ENCODE measurements at regions of chr1 and their contacts with region 1.

Region 1: GRCh38 chr1:16055613-16056520 is 12.3 kb downstream of the CLCNKB start:
- DNase-seq: peak; percentile 86 to 88
- H3K4me3 ChIP-seq: no peak overlapping the region
- H3K27ac ChIP-seq: no peak overlapping the region
- H3K4me1 ChIP-seq: no peaks in the 10 kb centered on the region
- H3K27me3 ChIP-seq: no peaks in the 10 kb centered on the region
- CTCF ChIP-seq: peak; percentile 94 to 98 (median 98)
- POLR2A ChIP-seq: no peak

Region 2: DNA sequence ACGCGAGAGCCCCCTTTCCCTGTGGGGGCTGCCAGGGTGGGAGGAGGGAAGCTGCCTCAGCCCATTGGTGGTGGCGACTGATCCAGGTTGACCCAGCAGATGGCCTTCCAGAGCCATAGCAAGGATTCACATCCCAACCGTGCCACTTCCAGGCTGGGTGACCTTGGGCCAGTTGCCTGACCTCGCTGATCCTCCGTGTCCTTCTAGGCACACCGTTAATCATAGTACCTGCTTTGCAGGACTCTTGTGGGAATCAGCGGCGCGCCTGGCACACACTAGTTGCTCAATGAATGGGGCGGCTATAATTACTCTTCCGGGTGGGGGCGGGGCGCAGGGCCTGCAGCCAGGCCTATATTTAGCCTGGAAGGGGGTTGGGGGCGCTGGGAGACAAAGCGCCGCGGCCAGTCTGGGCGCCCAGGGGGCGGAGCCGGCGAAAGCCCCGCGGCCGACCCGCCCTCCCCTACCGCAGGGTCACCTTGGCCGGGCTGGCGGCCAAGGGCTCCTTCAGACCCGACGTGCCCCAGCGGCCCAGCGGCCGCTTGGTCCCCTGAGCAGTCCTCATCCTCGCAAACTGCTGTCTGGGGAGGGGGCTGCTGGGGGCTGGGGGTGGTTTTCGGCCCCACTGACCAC is 43.2 kb before region 1 on chr1:
- intact Hi-C with region 1: no loop called
- DNase-seq: peak; percentile 54 to 84
- H3K4me3 ChIP-seq: peak overlapping the region; percentile 32 to 64 (median 48)
- H3K27ac ChIP-seq: peak overlapping the region; percentile 73 to 87
- H3K4me1 ChIP-seq: peaks cover 4 to 6% of the 10 kb centered on the region in 2 donors
- H3K27me3 ChIP-seq: no peaks in the 10 kb centered on the region
- CTCF ChIP-seq: no peak
- POLR2A ChIP-seq: no peak

Region 3: DNA sequence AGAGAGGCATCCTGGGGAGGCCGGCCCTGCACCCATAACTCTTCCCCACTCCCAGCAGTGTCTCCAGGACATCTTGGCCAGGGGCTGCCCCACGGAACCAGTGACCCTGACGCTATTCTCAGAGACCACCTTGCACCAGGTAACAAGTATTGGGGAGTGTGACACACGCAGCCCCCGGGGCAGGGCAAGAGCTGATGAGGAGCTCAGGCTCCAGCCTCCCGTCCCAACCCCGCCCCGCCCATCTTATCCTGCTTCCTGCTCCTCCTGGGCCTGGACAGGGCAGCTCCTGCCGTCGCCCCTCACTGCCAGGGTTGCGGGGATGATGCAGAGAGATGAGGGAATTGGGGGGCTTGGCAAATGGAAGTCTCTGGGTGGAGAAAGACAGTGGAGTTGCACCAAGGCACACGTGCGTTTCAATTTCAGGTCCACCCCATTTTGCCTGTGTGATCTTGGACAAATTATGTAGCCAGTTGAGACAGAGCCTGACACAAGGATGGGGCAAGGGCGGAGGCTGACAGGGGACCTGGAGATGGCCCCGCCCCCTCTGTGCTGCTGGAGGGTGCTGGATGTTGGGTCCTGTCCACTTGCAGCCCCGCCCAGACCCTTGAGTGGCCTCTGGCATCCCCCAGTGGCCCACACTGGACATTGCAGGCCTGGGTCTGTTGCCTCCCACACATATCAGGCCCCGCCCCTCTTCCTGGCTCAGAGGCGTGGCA is 23.3 kb before region 1 on chr1:
- intact Hi-C with region 1: loop called (anchors 2 kb)
- DNase-seq: peak; percentile 66 to 83
- H3K4me3 ChIP-seq: no peak overlapping the region
- H3K27ac ChIP-seq: no peak overlapping the region
- H3K4me1 ChIP-seq: no peaks in the 10 kb centered on the region
- H3K27me3 ChIP-seq: peaks cover 0 to 10% of the 10 kb centered on the region in 2 donors
- CTCF ChIP-seq: peak; percentile 91 to 99 (median 97)
- POLR2A ChIP-seq: no peak

Measured in breast epithelium (tissue), 4 donors.